Left lung (tissue), 14 donors: ENCODE measurements at regions of chr20 and their contacts with region 1.

Region 1: DNA sequence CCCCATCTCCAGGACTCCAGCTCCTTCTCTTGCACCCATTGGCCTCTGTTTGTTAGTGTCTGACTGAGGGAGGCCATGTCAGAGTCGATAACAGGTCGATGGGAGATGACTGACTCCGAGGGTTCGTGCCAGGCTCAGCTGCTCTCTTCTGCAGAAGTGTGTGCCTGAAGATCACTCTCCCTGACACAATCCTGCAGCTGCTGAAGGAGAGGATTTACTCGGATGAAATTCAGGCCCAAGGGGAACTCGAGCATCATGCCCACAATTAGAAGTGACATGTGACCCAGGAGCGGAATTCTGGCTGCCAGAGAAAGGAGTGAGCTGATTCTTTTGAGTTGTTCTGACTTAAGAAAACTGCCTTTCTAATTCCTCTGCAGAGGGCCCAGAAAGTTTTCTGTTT is 318.2 kb downstream of the MAFB start:
- DNase-seq: no peak
- ATAC-seq: no peak
- H3K4me3 ChIP-seq: no peak overlapping the region
- H3K27ac ChIP-seq: no peak overlapping the region
- H3K4me1 ChIP-seq: no peaks in the 10 kb centered on the region
- H3K27me3 ChIP-seq: no peaks in the 10 kb centered on the region
- CTCF ChIP-seq: no peak

Region 2: GRCh38 chr20:39706184-39706663 is 664.6 kb before region 1 on chr20:
- intact Hi-C with region 1: no loop called
- DNase-seq: no peak
- ATAC-seq: no peak
- H3K4me3 ChIP-seq: no peak overlapping the region
- H3K27ac ChIP-seq: no peak overlapping the region
- H3K4me1 ChIP-seq: no peaks in the 10 kb centered on the region
- H3K27me3 ChIP-seq: no peaks in the 10 kb centered on the region
- CTCF ChIP-seq: no peak

Region 3: DNA sequence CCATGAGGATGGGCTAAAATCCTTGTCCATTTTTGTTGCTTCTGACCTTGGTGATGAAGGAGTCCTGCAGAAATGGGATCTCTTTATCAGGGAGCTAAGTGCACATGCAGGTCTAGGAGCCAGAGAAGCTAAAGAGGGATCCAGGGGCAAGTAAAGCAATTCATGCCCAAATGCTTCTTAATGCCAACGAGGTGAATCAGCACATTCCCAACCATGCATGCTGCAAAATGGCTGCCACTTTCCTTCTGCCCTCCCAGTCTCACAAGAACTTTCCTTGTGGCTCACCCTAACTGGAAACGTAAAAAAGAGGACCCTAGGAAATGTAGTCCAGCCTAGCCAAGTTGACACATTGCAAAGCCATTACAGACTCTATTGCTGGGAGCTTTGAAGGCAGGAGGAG is 19.9 kb after region 1 on chr20:
- intact Hi-C with region 1: loop called in 1 of 2 experiments (anchors 2 kb)
- DNase-seq: no peak
- ATAC-seq: no peak
- H3K4me3 ChIP-seq: no peak overlapping the region
- H3K27ac ChIP-seq: no peak overlapping the region
- H3K4me1 ChIP-seq: peaks cover 0 to 3% of the 10 kb centered on the region in 2 donors
- H3K27me3 ChIP-seq: no peaks in the 10 kb centered on the region
- CTCF ChIP-seq: no peak

Region 4: DNA sequence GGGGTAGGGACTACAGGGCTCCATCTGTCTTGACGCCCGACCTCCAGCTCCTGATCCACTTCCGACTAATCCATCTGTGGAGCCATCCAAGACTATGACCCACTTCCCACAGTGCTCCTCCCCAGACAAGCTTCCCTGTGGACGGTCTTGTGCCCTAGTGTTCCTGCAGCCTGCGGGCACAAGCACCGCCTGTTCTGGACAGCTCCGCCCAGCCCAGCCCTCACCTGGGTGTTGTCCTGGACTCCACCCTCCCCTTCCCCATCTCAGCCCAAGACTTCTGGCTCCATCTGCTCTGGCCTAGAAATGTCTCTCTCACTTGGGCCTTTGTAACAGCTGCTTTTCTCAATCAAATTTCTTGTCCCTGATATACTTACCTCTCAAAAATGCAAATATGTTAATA is 216.2 kb after region 1 on chr20:
- intact Hi-C with region 1: no loop called
- DNase-seq: no peak
- ATAC-seq: no peak
- H3K4me3 ChIP-seq: no peak overlapping the region
- H3K27ac ChIP-seq: no peak overlapping the region
- H3K4me1 ChIP-seq: peaks cover 0 to 20% of the 10 kb centered on the region in 2 donors
- H3K27me3 ChIP-seq: peaks cover 0 to 5% of the 10 kb centered on the region in 2 donors
- CTCF ChIP-seq: no peak